HepG2 (cell line): ENCODE measurements at regions of chr4 and their contacts with region 1.

Region 1: DNA sequence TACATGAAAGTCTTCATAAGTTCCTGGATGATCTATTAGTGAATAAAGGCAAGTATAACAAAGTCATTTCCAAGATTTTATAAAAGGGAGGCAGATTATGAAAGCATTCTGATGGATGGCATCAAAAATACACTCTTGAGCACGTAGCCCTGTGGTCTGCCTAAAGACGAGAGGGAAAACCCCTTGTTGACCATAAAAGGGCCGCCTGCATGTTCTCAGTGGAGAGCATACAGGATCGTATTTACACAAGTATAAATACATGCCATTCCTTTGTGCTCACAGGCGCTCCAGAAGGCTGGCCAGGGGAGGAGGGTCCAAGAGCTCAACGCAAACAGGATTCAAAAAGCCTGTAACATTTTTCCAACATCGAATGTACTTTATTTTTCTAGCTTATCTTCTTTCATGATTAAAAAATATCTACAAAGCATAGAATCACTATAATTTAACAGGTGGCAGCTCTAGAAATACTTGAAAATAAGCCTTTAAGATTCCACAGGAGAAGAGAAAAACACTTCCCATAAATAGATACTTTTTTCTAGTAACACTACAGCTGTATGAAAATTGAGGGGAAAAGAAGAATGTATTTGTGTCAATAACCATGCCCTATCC is 29.6 kb downstream of the PDGFC start:
- DNase-seq: peak; percentile 98
- ATAC-seq: peak; percentile 100
- H3K4me3 ChIP-seq: peak overlapping the region in 2 of 3 experiments; percentile 57; a peak in 2 of 6 replicates
- H3K27ac ChIP-seq: peak overlapping the region; percentile 91
- H3K4me1 ChIP-seq: peaks cover 44% of the 10 kb centered on the region
- H3K27me3 ChIP-seq: no peaks in the 10 kb centered on the region
- CTCF ChIP-seq: no peak
- EP300 ChIP-seq: peak; percentile 26 to 85; a peak in 2 of 4 replicates
- POLR2A ChIP-seq: no peak
- RAD21 ChIP-seq: no peak

Region 2: DNA sequence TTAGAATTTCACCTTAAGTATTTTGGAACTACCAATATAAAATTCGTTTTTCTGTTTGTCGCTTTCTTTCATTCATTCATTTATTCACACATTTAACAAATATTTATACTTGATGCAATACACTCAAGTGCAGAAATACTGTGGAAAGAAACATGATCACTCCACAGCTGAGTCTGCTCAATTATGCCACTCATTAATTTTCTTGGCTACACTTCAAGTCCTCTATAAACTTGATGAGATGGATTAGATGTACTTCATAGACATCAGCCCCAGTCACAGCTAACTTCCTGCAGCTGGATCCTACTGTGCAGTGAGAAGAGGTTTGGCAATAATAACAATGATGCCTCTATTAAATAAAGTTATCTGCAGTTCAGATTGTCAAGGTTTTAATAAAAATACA is 178.5 kb before region 1 on chr4:
- CTCF ChIA-PET with region 1: no interaction called
- POLR2A ChIA-PET with region 1: no interaction called
- in situ Hi-C with region 1: no loop called
- intact Hi-C with region 1: loop called (anchors 5 kb)
- DNase-seq: no peak
- ATAC-seq: no peak
- H3K4me3 ChIP-seq: no peak overlapping the region
- H3K27ac ChIP-seq: no peak overlapping the region
- H3K4me1 ChIP-seq: peaks cover 23% of the 10 kb centered on the region
- H3K27me3 ChIP-seq: no peaks in the 10 kb centered on the region
- CTCF ChIP-seq: no peak
- EP300 ChIP-seq: no peak
- POLR2A ChIP-seq: no peak
- RAD21 ChIP-seq: no peak

Region 3: DNA sequence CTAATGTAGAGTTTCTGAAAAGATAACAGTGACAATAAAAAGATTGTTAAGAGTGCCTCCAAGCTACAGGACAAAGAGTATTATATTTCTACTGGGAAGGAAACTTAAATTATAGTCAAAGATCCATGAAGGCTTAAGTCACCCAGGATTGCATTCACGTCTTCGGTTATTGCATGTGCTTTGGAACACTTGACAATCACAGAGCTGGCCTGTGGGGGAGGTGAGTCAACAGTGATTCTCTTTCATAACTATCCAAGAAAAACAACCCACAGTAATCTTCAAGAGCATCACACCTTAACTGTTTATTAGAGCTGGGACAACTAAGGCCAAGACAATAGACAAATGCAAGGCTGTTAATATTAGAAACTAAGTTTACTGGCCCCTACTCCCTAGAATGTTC is 10.8 kb before region 1 on chr4:
- CTCF ChIA-PET with region 1: no interaction called
- POLR2A ChIA-PET with region 1: interaction called, 13 read pairs
- in situ Hi-C with region 1: no loop called
- intact Hi-C with region 1: loop called (anchors 1 kb)
- DNase-seq: peak; percentile 70
- ATAC-seq: peak; percentile 67; the same call in 2 of the 3 replicates
- H3K4me3 ChIP-seq: no peak overlapping the region
- H3K27ac ChIP-seq: no peak overlapping the region
- H3K4me1 ChIP-seq: peaks cover 14% of the 10 kb centered on the region
- H3K27me3 ChIP-seq: no peaks in the 10 kb centered on the region
- CTCF ChIP-seq: no peak
- EP300 ChIP-seq: peak in 1 of 2 experiments; percentile 65; a peak in 1 of 4 replicates
- POLR2A ChIP-seq: no peak
- RAD21 ChIP-seq: no peak